ENCODE measurements at regions of chr11 and their contacts with region 1.

Region 1: DNA sequence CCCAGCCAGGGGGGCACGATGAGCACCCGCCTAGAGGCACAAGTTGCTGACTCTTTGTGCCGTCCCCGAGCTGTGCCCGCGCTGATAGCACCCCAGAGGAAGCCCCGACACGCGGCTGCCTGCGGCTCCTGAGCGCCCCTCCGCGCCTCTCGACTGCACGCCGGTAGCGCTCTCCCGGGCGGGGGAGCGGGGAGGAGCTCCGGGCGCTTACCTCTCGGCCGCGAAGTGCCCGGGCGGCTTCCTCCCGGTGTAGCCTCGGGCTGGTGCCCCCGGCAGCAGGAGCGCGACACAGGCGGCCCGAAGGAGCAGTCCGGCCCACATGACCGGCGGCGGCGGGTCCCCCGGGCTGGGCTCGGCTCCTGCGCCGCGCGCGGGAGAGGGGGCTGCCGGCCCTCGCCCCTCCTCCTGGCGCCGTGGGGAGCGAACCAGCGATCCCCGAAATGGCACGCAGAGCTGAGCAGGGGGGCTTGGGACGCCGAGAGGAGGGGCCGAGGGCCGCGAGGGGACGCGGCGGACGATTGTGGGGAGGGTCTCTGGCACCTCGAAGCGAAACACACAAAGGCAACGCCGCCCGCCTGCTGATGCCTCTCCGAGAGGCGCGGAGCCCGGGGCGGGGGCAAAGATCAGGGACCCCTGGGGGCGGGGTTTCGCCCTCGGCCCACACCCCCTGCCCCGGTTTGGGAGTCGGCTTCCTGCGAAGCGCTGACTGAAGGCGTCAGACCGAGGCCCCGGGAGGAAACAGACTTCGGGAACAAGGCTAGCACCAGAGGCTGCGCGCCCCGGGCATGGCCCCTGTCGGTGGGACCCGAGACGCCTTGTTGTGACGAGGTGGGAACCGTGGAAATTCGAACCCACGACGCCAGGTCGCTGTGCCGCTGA is at the start of gene VWCE:
- DNase-seq: no peak
- ATAC-seq: peak; percentile 82
- H3K4me3 ChIP-seq: peak within 1 kb of the TSS; percentile 48 to 62
- H3K27ac ChIP-seq: no peak within 1 kb of the TSS
- H3K4me1 ChIP-seq: no peaks in the 10 kb centered on the region
- H3K27me3 ChIP-seq: no peaks in the 10 kb centered on the region
- CTCF ChIP-seq: peak; percentile 71; the same call in 1 of the 2 replicates
- total RNA-seq, gene VWCE: 0.51 TPM

Region 2: DNA sequence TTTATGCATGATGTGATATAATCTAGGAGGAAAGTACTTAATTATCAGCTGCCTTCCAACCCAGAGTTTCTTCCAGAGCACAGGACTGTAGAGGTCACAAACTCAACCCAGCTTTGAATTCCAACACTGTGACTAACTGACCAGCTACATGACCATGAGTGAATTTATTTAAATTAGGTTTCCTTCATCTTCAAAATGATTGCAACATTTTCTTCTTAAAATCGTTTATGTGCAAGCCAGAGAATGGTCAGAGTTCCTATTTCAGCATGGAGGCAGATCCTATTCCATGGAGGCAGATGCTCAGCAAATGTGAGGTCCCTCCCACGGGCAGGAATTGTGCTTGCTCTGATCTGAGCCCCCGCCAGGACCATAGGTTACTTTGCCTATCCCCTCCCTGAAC is 1721.7 kb before region 1 on chr11:
- CTCF ChIA-PET with region 1: no interaction called
- POLR2A ChIA-PET with region 1: interaction called, 13 read pairs
- in situ Hi-C with region 1: no loop called
- intact Hi-C with region 1: no loop called
- DNase-seq: no peak
- ATAC-seq: no peak
- H3K4me3 ChIP-seq: no peak overlapping the region
- H3K27ac ChIP-seq: no peak overlapping the region
- H3K4me1 ChIP-seq: no peaks in the 10 kb centered on the region
- H3K27me3 ChIP-seq: no peaks in the 10 kb centered on the region
- CTCF ChIP-seq: no peak

Region 3: DNA sequence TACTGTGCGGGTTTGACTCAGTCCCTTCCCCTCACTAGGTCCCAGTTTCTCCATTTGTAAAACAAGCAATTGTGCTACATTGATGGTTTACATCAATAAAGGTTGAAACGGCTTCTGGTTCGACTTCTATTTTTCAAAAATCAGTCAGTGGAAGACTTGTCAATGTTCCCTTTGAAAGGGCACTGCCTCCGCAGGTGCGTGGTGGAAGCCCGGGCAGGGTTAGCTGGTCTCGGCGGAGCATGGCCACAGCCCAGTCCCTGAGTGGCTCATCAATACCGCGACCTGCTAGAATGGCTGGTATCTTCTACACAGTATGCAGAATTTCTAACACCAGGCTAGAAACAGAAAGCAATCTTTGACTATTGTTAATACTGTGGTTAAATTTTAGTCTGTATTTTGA is 493.8 kb before region 1 on chr11:
- CTCF ChIA-PET with region 1: no interaction called
- POLR2A ChIA-PET with region 1: no interaction called
- in situ Hi-C with region 1: no loop called
- intact Hi-C with region 1: no loop called
- DNase-seq: no peak
- ATAC-seq: no peak
- H3K4me3 ChIP-seq: no peak overlapping the region
- H3K27ac ChIP-seq: no peak overlapping the region
- H3K4me1 ChIP-seq: no peaks in the 10 kb centered on the region
- H3K27me3 ChIP-seq: peaks cover 7% of the 10 kb centered on the region; the same call in 1 of the 2 replicates
- CTCF ChIP-seq: no peak

Region 4: DNA sequence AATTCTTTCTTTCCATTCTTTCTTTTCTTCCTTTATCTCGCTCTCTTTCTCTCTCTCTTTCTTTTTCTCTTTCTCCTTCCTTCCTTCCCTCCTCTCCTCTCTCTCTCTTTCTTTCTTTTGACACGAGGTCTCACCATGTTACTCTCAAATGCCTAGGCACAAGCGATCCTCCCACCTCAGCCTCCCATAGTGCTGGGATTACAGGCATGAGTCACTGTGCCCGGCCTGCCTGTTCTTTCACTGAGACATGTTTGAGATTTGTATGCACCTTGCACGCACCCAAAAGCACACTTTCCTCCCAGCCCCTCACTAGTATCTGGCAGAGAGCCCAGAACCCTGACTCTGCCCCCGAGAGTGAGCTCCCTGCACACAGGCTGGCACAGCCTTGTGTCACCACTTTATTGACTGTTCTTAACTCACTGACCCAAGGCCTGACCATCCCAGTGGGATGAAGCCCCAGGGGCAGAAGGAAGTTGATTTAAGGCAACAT is 266.6 kb before region 1 on chr11:
- CTCF ChIA-PET with region 1: no interaction called
- POLR2A ChIA-PET with region 1: no interaction called
- in situ Hi-C with region 1: no loop called
- intact Hi-C with region 1: no loop called
- DNase-seq: no peak
- ATAC-seq: no peak
- H3K4me3 ChIP-seq: no peak overlapping the region
- H3K27ac ChIP-seq: no peak overlapping the region
- H3K4me1 ChIP-seq: no peaks in the 10 kb centered on the region
- H3K27me3 ChIP-seq: no peaks in the 10 kb centered on the region
- CTCF ChIP-seq: no peak

Region 5: GRCh38 chr11:61256710-61257482 is 38.1 kb before region 1 on chr11:
- CTCF ChIA-PET with region 1: no interaction called
- POLR2A ChIA-PET with region 1: no interaction called
- in situ Hi-C with region 1: no loop called
- intact Hi-C with region 1: no loop called
- DNase-seq: no peak
- ATAC-seq: no peak
- H3K4me3 ChIP-seq: no peak overlapping the region
- H3K27ac ChIP-seq: no peak overlapping the region
- H3K4me1 ChIP-seq: no peaks in the 10 kb centered on the region
- H3K27me3 ChIP-seq: no peaks in the 10 kb centered on the region
- CTCF ChIP-seq: no peak

Region 6: DNA sequence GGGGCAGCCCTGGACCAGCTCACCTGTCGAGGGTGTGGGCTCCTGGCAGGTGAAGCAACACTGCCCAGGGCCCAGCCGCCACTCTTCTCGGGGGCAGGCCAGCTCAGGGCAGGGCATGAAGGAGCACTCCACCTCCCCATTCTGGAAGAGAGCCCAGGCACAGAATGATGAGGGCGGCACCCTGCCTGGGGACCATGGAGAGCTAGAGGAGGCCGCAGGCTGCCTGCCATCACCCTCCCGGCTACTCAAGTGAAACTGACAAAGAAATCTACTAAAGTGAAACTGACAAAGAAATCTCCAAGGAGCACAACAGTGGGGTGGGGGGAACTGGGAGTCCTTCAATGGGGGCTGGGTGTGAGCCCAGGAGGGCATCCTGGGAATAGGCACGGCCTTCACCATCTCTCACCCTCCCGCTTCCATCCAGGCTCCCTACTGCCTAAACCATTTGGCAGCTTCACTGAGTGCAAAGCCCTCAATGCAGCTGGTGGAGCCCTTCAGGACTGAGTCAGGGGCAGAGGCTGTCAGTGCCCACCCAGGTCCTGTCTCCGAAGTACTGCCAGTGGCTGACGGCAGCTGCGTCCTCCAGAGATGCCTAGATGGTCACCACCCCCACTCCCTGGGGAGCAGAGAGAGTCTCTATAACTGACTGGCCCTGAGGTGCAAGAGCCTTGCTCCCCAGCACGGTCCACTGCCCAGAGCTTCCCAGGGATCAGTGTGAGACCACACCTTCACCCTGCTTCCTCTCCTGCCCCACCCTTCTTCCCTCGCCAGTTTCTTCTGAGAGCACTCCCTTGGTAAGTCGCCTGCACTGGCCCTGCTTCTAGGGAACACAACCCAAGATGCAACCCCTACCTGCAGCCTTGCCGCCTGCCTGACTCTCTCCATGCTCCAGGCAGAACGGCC is 21.5 kb before region 1 on chr11:
- CTCF ChIA-PET with region 1: no interaction called
- POLR2A ChIA-PET with region 1: no interaction called
- in situ Hi-C with region 1: no loop called
- intact Hi-C with region 1: no loop called
- DNase-seq: no peak
- ATAC-seq: peak; percentile 52
- H3K4me3 ChIP-seq: no peak overlapping the region
- H3K27ac ChIP-seq: no peak overlapping the region
- H3K4me1 ChIP-seq: no peaks in the 10 kb centered on the region
- H3K27me3 ChIP-seq: no peaks in the 10 kb centered on the region
- CTCF ChIP-seq: no peak

Region 7: DNA sequence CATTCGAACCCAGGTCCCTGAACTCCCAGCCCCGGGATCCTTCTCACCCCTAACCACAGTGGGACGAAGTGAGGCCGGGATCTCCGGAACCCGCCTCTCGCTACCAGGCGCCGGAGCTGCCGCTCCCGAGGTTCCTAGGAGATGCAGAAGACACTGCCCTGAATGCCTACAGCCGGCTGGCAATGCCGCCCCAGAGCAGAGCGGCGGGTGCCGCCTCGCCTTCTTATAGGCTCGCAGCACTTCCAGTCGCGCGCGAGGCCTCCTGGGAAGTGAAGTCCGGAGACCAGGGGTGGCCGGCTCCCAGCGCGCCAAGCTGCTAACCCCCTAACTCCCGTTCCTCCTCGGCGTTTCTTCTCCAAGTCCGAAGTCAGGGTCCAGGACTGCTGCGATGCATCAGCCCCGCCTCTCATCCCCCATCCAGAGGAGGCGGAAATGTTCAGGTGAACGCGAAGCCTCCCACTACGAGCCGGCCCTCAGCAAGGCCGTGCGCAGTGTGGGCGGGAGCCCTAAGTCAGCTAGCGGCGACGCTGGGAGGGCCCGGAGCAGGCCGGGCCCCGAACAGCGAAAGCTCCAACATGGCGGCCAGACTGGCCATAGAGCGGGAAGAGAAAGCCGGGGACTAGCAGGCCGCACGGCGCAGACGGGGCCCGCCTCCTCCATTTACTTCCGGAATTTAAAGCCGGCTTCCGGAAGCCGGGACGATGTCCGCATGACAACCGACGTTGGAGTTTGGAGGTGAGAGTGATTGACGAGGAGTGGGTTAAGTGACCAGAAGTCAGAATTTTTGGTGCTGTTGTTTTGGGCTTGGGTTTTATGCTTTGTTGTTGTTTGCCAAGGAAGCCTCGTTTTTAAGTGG is 67.0 kb after region 1 on chr11 and contains the starts of genes CYB561A3 and TMEM138:
- CTCF ChIA-PET with region 1: no interaction called
- POLR2A ChIA-PET with region 1: interaction called, 11 read pairs
- in situ Hi-C with region 1: no loop called
- intact Hi-C with region 1: no loop called
- DNase-seq: peak; percentile 77
- ATAC-seq: peak; percentile 97
- H3K4me3 ChIP-seq: peak within 1 kb of the TSS; percentile 94 to 95
- H3K27ac ChIP-seq: peak within 1 kb of the TSS; percentile 99
- H3K4me1 ChIP-seq: peaks cover 12% of the 10 kb centered on the region
- H3K27me3 ChIP-seq: no peaks in the 10 kb centered on the region
- CTCF ChIP-seq: no peak
- total RNA-seq, gene CYB561A3: 80.3 TPM
- total RNA-seq, gene TMEM138: 86.6 TPM